ENCODE measurements at regions of chr20 and their contacts with region 1.

Region 1: GRCh38 chr20:50528804-50529351 is 18.7 kb downstream of the PTPN1 start:
- DNase-seq: no peak
- ATAC-seq: peak; percentile 85
- H3K4me3 ChIP-seq: peak overlapping the region; percentile 59
- H3K27ac ChIP-seq: peak overlapping the region; percentile 78
- H3K4me1 ChIP-seq: peaks cover 42% of the 10 kb centered on the region
- H3K27me3 ChIP-seq: no peaks in the 10 kb centered on the region
- CTCF ChIP-seq: no peak
- EP300 ChIP-seq: no peak
- POLR2A ChIP-seq: no peak
- RAD21 ChIP-seq: no peak

Region 2: DNA sequence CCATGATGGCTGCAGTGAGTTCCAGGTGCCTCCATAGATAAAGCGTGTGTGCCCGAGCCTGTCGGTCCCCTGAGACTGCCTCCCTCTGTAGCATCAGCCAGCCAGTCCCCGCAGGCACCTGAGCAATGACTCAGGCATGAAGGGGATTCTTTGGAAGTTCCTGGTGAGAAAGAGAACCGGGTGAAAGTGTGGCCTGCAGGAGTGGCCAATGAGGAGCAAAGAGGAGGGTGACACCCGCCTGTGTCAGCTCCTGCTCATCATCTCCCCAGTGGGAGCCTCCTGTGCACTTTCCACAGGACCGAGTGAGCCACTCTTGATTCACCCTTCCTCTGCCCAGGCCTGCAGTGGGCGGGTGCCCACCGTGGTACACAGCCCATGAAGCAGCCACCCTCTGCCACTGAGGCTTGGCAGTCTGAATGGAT is 89.9 kb before region 1 on chr20:
- CTCF ChIA-PET with region 1: no interaction called
- POLR2A ChIA-PET with region 1: no interaction called
- RAD21 ChIA-PET with region 1: no interaction called
- SMC1A ChIA-PET with region 1: no interaction called
- in situ Hi-C with region 1: no loop called
- intact Hi-C with region 1: no loop called
- DNase-seq: no peak
- ATAC-seq: no peak
- H3K4me3 ChIP-seq: no peak overlapping the region
- H3K27ac ChIP-seq: no peak overlapping the region
- H3K4me1 ChIP-seq: peaks cover 14% of the 10 kb centered on the region
- H3K27me3 ChIP-seq: no peaks in the 10 kb centered on the region
- CTCF ChIP-seq: no peak
- EP300 ChIP-seq: no peak
- POLR2A ChIP-seq: no peak
- RAD21 ChIP-seq: no peak

Region 3: GRCh38 chr20:50540620-50541605 is 12.0 kb after region 1 on chr20:
- CTCF ChIA-PET with region 1: interaction called, 13 read pairs
- POLR2A ChIA-PET with region 1: interaction called, 9 read pairs
- RAD21 ChIA-PET with region 1: interaction called, 7 read pairs
- SMC1A ChIA-PET with region 1: interaction called, 2,799 read pairs
- in situ Hi-C with region 1: no loop called
- intact Hi-C with region 1: no loop called
- DNase-seq: no peak
- ATAC-seq: peak; percentile 18
- H3K4me3 ChIP-seq: peak overlapping the region; percentile 42
- H3K27ac ChIP-seq: peak overlapping the region; percentile 78
- H3K4me1 ChIP-seq: peaks cover 67% of the 10 kb centered on the region
- H3K27me3 ChIP-seq: no peaks in the 10 kb centered on the region
- CTCF ChIP-seq: no peak
- EP300 ChIP-seq: no peak
- POLR2A ChIP-seq: peak; percentile 28; the same call in 1 of the 2 replicates
- RAD21 ChIP-seq: no peak

Measured in GM12878 (cell line).